Dorsolateral prefrontal cortex (tissue), 120 donors: ENCODE measurements at regions of chr1 and their contacts with region 1.

Region 1: DNA sequence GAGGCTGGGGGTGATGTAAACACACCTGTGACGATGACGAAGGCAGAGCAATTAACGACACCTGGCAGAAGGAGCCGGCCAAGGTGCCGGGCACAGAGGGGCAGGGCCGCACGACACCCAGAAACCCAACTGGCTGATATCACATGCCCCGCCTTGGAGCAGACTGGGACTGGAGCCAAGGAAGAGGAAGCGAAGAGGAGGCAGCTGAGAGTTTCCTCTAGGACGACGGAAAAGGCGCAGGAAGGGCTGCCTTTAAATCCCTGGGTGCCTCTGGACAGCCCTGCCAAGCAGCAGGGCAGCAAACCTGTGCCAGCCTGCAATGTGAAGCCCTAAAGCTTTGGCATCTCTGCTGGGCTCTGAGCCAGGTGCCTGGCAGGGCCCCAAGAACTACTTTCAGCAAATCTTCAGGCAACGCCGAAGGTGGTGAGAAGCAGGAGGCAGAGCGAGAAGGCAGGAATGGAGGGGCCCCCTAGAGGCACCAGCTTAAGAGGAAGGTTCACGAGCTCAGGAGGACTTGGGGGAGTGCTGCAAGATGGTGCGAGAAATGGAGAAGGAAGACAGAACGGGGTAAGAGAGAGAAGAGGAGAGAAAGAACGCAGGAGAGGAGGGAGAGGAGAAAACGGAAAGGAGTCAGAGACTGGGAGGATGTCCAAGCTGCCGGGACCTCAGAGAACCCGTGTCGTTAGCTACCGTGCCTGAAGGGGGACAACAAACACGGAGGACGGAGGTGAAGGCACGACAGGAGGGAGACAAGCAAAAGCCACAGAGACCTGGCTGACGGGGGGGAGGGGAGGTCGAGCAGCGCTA is 25.3 kb upstream of the PEF1 start:
- DNase-seq: peak; percentile 63 to 88 (median 82)
- H3K4me3 ChIP-seq: peak overlapping the region in 52 of 59 donors; percentile 1 to 58 (median 36)
- H3K27ac ChIP-seq: peak overlapping the region in 55 of 59 donors; percentile 5 to 86 (median 66)
- H3K27me3 ChIP-seq: no peaks in the 10 kb centered on the region
- CTCF ChIP-seq: peak in 33 of 56 donors; percentile 10 to 46 (median 28)

Region 2: GRCh38 chr1:31689821-31690220 is 19.8 kb after region 1 on chr1:
- intact Hi-C with region 1: loop called in 1 of 2 experiments (anchors 2 kb)
- DNase-seq: no peak
- H3K4me3 ChIP-seq: no peak overlapping the region
- H3K27ac ChIP-seq: no peak overlapping the region
- H3K27me3 ChIP-seq: no peaks in the 10 kb centered on the region
- CTCF ChIP-seq: no peak

Region 3: DNA sequence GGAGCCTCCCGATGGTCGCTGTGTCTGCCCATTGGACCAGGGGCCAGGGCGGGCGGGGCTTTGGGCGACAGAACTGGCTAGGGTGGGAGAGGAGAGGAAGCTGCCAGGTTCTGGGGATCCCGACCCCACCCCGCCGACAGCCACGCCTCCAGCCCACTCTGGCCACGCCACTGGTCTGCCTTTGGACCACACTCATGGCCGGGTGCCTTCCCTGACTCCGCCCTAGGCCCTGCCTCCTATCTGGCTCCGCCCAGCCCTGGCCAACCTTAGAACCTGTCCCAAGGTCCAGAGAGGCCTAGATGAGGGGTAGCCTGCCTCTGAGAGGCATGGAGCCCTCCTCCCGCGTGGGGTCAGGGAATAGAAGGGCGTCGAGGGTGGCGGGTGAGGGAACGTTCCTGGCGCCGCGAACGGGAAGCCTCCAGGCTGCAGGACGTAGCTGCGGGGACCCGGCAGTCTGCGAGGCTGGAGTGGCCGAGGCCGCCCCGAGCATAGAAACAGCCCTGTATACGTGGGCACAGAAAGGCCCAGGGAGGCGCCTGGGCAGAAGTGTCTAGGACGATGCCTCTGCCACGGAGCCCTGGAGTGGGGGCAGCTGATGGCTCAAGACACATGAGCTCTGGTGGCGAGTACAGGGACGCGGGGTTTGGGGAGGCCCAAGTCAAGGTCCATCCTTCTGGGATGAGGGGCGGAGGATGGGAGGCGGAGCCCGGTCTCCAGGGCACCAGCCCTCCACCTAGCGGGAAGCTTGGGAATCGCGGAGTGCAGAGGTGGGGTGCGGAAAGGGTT is 45.3 kb after region 1 on chr1:
- intact Hi-C with region 1: loop called in 1 of 2 experiments (anchors 5 kb)
- DNase-seq: peak; percentile 66 to 96 (median 77)
- H3K4me3 ChIP-seq: peak overlapping the region; percentile 34 to 71 (median 55)
- H3K27ac ChIP-seq: peak overlapping the region in 58 of 59 donors; percentile 6 to 94 (median 81)
- H3K27me3 ChIP-seq: no peaks in the 10 kb centered on the region
- CTCF ChIP-seq: peak; percentile 57 to 95 (median 84)